K562 (cell line): ENCODE measurements at regions of chr11 and their contacts with region 1.

Region 1: GRCh38 chr11:58770627-58771457 is 39.1 kb upstream of the GLYAT start:
- DNase-seq: peak; percentile 56 to 96 (median 68)
- ATAC-seq: peak; percentile 88
- H3K4me3 ChIP-seq: peak overlapping the region; percentile 16; the same call in 1 of the 2 replicates
- H3K27ac ChIP-seq: peak overlapping the region; percentile 81
- H3K4me1 ChIP-seq: peaks cover 11 to 78% of the 10 kb centered on the region in 2 experiments
- H3K27me3 ChIP-seq: no peaks in the 10 kb centered on the region
- CTCF ChIP-seq: no peak
- EP300 ChIP-seq: peak; percentile 79
- POLR2A ChIP-seq: peak; percentile 73
- RAD21 ChIP-seq: peak in 1 of 2 experiments; percentile 9; a peak in 1 of 4 replicates

Region 2: DNA sequence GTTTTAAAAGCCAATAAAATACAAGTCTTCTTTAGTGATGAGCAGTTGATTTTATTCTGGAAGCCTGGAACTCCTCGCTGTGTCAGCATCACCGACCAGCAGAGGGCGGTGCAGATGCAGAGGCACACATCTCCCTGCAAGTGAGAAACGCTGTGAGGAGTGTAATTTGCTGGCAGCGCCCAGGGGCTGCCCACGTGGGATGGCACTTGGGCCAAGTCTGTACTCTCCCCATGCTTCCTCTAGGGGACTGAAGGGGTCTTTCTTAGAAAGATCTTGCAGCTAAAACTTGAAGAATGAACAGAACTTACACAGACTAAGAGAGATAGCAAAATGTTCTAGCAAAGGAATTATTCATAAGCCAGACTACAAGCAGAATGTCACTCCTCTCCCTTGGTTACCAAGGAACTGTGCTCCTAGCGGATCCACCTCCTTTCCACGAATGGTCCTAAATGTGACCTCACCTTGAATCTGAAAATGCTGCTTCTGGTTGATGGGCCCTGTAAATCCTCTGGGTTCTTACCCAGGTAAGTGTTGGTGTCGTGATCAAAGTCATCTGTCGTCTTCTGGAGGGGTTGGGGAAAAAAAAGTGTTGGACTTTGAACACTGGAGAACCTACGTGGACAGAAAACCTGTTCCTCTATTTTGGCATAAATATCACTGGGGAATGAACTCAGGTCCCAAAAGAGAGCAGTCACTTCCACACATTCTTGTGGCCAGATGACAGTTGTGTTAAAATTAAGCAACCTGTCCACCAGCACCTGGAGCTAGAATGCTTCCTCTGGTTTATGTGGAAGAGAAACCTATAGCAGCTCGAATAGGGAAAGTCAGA is 116.5 kb before region 1 on chr11:
- CTCF ChIA-PET with region 1: no interaction called
- POLR2A ChIA-PET with region 1: no interaction called
- in situ Hi-C with region 1: no loop called
- intact Hi-C with region 1: no loop called
- DNase-seq: peak; percentile 57 to 81 (median 60)
- ATAC-seq: peak; percentile 97
- H3K4me3 ChIP-seq: no peak overlapping the region
- H3K27ac ChIP-seq: no peak overlapping the region
- H3K4me1 ChIP-seq: no peaks in the 10 kb centered on the region
- H3K27me3 ChIP-seq: no peaks in the 10 kb centered on the region
- CTCF ChIP-seq: peak; percentile 83 to 93 (median 92)
- EP300 ChIP-seq: no peak
- POLR2A ChIP-seq: no peak
- RAD21 ChIP-seq: peak; percentile 86 to 95

Region 3: DNA sequence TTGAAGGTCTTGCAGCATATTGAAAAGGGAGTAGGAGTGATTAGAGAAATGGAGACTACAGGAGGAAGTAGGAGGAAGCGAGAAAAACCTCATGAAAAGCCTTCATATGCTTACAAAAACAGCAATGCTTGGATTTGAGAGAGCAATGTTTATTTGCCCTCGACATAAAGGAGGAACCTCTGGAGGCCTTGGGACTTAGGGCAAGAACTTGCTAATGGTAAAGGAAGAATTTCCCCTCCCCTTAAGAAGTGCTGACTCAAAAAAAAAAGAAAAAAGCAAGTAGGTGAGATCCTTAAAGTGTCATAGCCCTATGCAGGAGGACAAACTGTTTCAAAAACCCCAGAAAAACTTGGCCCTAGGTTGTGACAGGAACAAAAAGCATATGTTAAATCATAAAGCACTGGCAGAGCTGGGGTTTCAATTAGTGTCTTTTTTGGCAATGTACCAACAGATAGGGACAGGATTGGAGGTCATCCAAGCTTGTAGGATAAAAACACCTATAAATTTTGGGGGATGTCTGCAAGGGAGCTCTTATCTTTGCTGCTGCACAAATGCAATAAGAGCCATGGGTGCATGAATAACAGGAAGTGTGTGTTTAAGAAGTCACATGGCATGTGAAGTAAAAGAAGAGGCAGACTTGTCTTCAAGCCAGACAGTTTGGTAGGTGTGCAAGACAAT is 44.0 kb before region 1 on chr11:
- CTCF ChIA-PET with region 1: no interaction called
- POLR2A ChIA-PET with region 1: no interaction called
- in situ Hi-C with region 1: no loop called
- intact Hi-C with region 1: loop called (anchors 2 kb)
- DNase-seq: peak in 2 of 4 experiments; percentile 58 to 80
- ATAC-seq: peak; percentile 76
- H3K4me3 ChIP-seq: no peak overlapping the region
- H3K27ac ChIP-seq: peak overlapping the region; percentile 66; the same call in 2 of the 3 replicates
- H3K4me1 ChIP-seq: peaks cover 0 to 25% of the 10 kb centered on the region in 2 experiments; a peak in 3 of 5 replicates
- H3K27me3 ChIP-seq: no peaks in the 10 kb centered on the region
- CTCF ChIP-seq: no peak
- EP300 ChIP-seq: peak; percentile 85
- POLR2A ChIP-seq: no peak
- RAD21 ChIP-seq: no peak

Region 4: DNA sequence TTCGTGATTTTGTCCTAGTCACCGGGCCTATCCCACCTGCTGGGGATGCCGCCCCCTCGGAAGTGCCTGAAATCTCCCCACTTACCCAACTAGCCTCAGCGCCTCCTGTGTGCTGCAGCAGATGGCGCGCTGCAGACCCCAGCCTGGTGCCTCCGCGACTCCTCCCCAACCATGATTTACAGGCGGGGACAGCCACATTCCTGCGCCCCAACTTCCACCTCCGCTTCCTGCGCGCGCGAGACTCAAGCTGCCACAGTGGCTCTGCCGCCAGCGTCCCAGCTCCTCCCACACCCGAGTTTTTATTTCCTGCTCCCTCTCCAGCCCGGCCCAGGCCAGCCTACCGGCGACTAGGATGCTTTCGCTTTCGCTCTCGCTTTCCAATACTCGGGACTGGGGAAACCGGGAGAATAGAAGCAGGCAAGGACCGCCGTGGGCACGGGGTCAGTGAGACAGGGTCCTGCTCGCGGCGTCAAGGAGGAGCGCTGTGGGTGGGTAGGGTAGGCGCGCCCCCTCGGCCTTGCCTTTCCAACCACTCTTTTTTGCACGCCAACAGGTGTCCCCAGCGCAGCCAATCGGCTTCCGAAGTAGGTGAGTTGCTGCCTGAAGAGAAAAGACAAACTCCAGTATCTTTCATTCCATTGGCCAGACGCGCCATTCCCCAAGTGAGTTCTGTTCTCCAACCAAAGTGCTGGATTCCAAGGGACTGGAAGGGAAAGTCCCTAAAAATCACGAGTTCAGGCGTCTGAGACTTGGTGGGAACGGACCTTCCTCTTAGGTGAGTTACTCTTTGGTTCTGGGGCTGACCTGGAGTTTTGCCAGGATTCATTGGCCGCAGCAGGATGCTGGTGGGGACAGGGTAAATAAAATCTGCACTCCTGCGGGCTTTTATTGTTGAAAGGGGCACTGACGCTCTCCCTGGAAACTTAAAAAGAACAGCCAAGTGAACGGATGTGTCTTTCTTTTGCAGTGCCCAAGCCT is 372.0 kb after region 1 on chr11 and contains the start of gene FAM111A:
- CTCF ChIA-PET with region 1: no interaction called
- POLR2A ChIA-PET with region 1: interaction called, 4 read pairs
- in situ Hi-C with region 1: no loop called
- intact Hi-C with region 1: loop called (anchors 10 kb)
- DNase-seq: peak; percentile 67 to 82 (median 72)
- ATAC-seq: peak; percentile 85
- H3K4me3 ChIP-seq: peak within 1 kb of the TSS; percentile 74
- H3K27ac ChIP-seq: peak within 1 kb of the TSS; percentile 55; the same call in 2 of the 3 replicates
- H3K4me1 ChIP-seq: peaks cover 14 to 19% of the 10 kb centered on the region in 2 experiments
- H3K27me3 ChIP-seq: no peaks in the 10 kb centered on the region
- CTCF ChIP-seq: peak; percentile 43 to 46 (median 44); a peak in 5 of 6 replicates
- EP300 ChIP-seq: no peak
- POLR2A ChIP-seq: peak; percentile 66
- RAD21 ChIP-seq: peak in 1 of 2 experiments; percentile 27; a peak in 2 of 4 replicates
- polyA plus RNA-seq, gene FAM111A: 14.8 to 16.5 TPM

Region 5: DNA sequence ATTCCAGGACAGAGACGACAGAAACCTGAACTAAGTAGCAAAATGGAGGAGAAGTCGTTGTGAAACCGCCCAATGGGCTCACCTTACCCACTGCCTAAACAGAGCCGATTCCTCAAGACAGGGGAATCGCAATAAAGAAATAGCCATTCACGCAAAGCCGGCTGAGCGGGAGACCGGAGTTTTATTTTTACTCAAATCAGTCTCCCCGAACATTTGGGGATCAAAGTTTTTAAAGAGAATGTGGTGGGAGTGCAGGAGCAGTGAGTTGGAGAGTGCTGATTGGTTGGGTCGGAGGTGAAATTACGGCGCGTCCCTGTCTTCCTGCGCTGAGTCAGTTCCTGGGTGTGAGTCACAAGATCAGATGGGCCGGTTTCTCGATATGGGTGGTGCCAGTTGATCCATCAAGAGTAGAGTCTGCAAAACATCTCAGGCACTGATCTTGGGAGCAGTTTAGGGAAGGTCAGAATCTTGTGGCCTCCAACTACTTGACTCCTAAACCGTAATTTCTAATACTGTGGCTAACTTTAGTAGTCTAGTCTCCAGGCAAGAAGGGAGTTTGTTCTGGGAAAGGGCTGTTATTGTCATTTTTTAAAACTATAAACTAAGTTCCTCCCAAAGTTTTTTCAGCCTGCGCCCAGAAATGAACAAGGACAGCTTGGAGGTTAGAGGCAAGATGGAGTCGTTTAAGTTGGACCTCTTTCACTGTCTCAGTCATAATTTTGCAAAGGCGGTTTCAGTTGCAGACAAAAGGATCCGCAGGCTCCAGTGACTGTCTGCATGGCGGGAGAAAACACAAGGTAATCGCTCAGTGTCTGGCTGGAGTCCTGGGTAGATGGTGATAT is 774.6 kb after region 1 on chr11:
- CTCF ChIA-PET with region 1: no interaction called
- POLR2A ChIA-PET with region 1: no interaction called
- in situ Hi-C with region 1: no loop called
- intact Hi-C with region 1: loop called (anchors 5 kb)
- DNase-seq: peak; percentile 89 to 98 (median 90)
- ATAC-seq: peak; percentile 80
- H3K4me3 ChIP-seq: peak overlapping the region; percentile 48
- H3K27ac ChIP-seq: peak overlapping the region; percentile 100
- H3K4me1 ChIP-seq: peaks cover 17 to 22% of the 10 kb centered on the region in 2 experiments; a peak in 3 of 5 replicates
- H3K27me3 ChIP-seq: no peaks in the 10 kb centered on the region
- CTCF ChIP-seq: no peak
- EP300 ChIP-seq: peak; percentile 88
- POLR2A ChIP-seq: peak; percentile 97
- RAD21 ChIP-seq: no peak